ENCODE measurements at regions of chr6 and their contacts with region 1.

Region 1: GRCh38 chr6:79869600-79870084 is 77.7 kb downstream of the ELOVL4 start:
- DNase-seq: peak; percentile 84 to 90 (median 86)
- ATAC-seq: peak; percentile 100
- H3K4me3 ChIP-seq: peak overlapping the region; percentile 7; the same call in 1 of the 2 replicates
- H3K27ac ChIP-seq: no peak overlapping the region
- H3K4me1 ChIP-seq: peaks cover 2 to 4% of the 10 kb centered on the region in 2 experiments; a peak in 3 of 5 replicates
- H3K27me3 ChIP-seq: peaks cover under 1 to 2% of the 10 kb centered on the region in 2 experiments; a peak in 3 of 5 replicates
- CTCF ChIP-seq: peak; percentile 87 to 94 (median 92)
- EP300 ChIP-seq: no peak
- POLR2A ChIP-seq: no peak
- RAD21 ChIP-seq: peak; percentile 39 to 59

Region 2: GRCh38 chr6:79570129-79571029 is 299.3 kb before region 1 on chr6:
- CTCF ChIA-PET with region 1: no interaction called
- POLR2A ChIA-PET with region 1: no interaction called
- in situ Hi-C with region 1: no loop called
- intact Hi-C with region 1: loop called (anchors 2 kb)
- DNase-seq: peak; percentile 38 to 62 (median 42)
- ATAC-seq: peak; percentile 87
- H3K4me3 ChIP-seq: no peak overlapping the region
- H3K27ac ChIP-seq: no peak overlapping the region
- H3K4me1 ChIP-seq: no peaks in the 10 kb centered on the region
- H3K27me3 ChIP-seq: no peaks in the 10 kb centered on the region
- CTCF ChIP-seq: peak; percentile 60 to 89 (median 60)
- EP300 ChIP-seq: no peak
- POLR2A ChIP-seq: no peak
- RAD21 ChIP-seq: peak; percentile 88 to 93

Region 3: DNA sequence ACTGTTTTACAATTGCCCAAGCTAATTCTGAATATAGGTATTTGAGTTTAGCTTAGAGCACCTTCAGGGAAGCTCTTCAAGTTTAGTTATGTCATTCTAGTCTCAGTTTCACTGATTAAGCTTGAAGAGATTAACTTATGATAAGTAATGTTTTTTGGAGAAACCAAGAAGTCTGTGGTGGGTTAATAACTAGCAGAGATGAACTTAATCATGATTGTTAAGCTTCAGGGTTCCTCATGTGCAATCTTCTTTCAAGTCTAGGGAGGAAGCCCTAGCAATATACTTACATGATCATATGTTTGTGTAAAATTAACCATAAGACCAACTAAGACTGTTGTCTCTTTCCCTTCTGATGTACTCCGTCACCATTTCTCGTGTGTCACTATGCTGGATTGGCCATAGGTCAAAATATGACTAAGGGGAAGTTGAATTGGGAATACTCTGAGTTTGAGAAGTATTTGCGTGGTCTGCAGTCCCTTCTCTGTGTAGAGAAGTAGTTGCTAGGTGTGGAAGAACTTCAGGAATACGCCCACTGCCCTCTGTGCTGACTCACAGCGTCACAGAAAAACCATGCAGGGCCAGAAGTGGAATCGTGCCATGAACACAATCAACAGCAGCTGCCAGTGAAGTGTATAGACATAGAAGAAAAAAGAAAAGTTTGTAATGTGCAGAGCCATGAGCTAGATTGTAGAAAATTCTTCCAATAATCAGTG is 150.2 kb before region 1 on chr6:
- CTCF ChIA-PET with region 1: interaction called, 3 read pairs
- POLR2A ChIA-PET with region 1: no interaction called
- in situ Hi-C with region 1: no loop called
- intact Hi-C with region 1: loop called (anchors 5 kb)
- DNase-seq: peak in 2 of 4 experiments; percentile 9 to 23
- ATAC-seq: peak; percentile 67
- H3K4me3 ChIP-seq: no peak overlapping the region
- H3K27ac ChIP-seq: no peak overlapping the region
- H3K4me1 ChIP-seq: no peaks in the 10 kb centered on the region
- H3K27me3 ChIP-seq: 0 out of 5 replicates have a peak, but pooled peaks cover 0 to 1% of the 10 kb centered on the region in 2 experiments
- CTCF ChIP-seq: no peak
- EP300 ChIP-seq: no peak
- POLR2A ChIP-seq: no peak
- RAD21 ChIP-seq: no peak

Region 4: DNA sequence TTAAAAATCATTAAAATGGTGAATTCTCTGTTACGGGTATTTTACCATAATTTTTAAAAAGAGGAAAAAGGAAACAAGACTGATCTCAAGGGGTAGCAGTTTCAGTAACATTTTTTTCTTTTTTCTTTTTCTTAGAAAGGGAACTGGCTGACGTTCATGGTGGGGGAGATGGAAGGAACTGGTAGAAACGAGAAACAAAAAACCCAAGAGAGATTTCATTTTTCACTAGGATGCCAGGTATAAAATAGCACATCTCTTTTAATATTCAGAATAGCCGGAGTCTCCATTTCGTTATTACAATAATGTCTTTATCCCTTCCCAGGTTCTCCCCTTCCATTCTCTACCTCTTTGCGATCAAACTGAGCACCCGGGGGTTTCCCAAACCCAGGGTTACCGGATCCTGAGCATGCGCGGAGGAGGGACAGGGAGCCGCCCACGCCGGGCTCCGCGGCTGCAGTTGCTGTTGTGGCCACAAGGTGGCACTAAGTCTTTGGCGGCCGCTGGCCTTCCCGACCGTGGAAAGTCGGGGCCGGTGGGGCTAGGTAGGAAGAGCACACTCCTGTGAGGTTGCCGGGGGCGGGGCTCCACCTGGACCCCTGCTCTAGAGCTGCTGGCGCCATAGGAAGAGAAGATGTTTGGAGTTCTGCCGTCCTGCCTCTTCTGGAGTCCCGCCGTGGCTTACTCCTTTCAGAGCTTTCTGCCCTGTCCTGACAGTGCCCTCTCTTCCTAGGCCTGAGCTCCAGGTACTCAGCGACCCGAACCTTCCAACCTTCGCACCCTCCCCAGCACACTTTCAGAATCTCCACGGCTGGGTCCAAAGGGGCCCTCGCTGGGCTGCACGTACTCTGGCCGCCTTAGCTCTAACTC is 91.7 kb before region 1 on chr6:
- CTCF ChIA-PET with region 1: interaction called, 18 read pairs
- POLR2A ChIA-PET with region 1: no interaction called
- in situ Hi-C with region 1: no loop called
- intact Hi-C with region 1: loop called (anchors 1 kb)
- DNase-seq: peak; percentile 89 to 95 (median 92)
- ATAC-seq: peak; percentile 98
- H3K4me3 ChIP-seq: peak overlapping the region; percentile 26
- H3K27ac ChIP-seq: no peak overlapping the region
- H3K4me1 ChIP-seq: peaks cover 0 to 6% of the 10 kb centered on the region in 2 experiments; a peak in 3 of 5 replicates
- H3K27me3 ChIP-seq: no peaks in the 10 kb centered on the region; a peak in 1 of 5 replicates
- CTCF ChIP-seq: peak; percentile 92 to 95 (median 93)
- EP300 ChIP-seq: no peak
- POLR2A ChIP-seq: no peak
- RAD21 ChIP-seq: peak; percentile 85 to 87

Region 5: DNA sequence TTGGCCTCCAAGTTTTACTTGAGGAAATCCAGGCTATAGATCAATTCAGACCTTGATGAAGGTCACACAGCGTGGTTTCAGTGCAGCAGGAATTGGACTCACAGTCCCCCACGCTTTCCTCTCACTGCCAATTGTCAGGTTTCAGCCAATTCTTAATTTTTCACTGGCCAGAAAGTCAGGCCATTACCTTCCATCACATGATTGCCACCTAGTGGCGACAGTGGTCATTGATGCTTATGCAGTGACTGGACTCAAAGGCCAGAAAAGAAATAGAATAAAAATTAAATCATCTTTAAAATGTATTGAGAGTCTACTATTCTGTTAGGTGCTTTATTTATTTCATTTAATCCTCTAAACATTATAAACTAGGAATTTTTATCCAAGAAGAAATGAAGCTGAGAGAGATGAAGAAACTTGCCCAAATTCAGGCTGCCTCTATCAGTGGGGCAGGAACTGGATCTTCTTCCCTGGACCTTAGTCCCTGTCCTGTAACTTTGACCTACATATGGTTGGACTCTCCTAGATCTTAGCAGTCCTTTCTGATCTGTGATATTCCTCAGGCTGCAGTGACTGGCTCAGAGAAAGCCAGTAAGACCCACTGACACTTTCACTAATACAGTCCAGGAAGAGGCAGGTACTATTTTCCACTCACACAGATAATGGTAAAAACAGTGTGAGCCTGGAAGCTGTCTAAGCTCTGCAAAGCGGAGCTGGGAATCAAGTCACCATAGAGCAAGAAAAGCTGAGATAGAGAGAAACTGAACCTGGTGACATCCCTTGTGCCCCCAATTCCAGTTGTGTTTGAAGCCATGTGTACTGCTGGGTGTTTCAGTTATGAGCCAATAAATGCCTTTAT is 55.6 kb before region 1 on chr6:
- CTCF ChIA-PET with region 1: no interaction called
- POLR2A ChIA-PET with region 1: no interaction called
- in situ Hi-C with region 1: no loop called
- intact Hi-C with region 1: loop called (anchors 1 kb)
- DNase-seq: peak; percentile 45 to 80 (median 50)
- ATAC-seq: peak; percentile 94
- H3K4me3 ChIP-seq: no peak overlapping the region
- H3K27ac ChIP-seq: no peak overlapping the region
- H3K4me1 ChIP-seq: no peaks in the 10 kb centered on the region
- H3K27me3 ChIP-seq: peaks cover 6 to 10% of the 10 kb centered on the region in 2 experiments; a peak in 2 of 5 replicates
- CTCF ChIP-seq: peak; percentile 74 to 89 (median 76)
- EP300 ChIP-seq: no peak
- POLR2A ChIP-seq: no peak
- RAD21 ChIP-seq: peak; percentile 85 to 86

Region 6: DNA sequence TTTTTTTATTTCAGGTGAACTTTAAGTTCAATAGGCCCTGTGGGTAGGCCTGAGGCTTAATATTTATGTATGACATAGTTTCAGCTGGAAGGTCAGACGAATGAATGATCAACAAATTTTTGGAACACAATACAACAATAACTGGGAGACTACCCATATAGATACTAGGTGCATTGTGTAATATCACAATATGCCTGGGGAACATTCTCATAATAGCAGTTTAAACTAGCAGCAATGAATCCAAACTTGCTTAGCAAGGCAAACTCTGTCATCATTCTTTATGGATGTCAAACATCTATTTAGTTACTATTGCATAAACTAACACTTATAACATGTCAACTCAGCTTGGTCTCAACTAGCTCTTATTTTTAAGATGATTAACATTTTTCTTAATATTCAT is 28.4 kb after region 1 on chr6:
- CTCF ChIA-PET with region 1: no interaction called
- POLR2A ChIA-PET with region 1: no interaction called
- in situ Hi-C with region 1: no loop called
- intact Hi-C with region 1: no loop called
- DNase-seq: no peak
- ATAC-seq: no peak
- H3K4me3 ChIP-seq: no peak overlapping the region
- H3K27ac ChIP-seq: no peak overlapping the region
- H3K4me1 ChIP-seq: no peaks in the 10 kb centered on the region
- H3K27me3 ChIP-seq: no peaks in the 10 kb centered on the region; a peak in 1 of 5 replicates
- CTCF ChIP-seq: no peak
- EP300 ChIP-seq: no peak
- POLR2A ChIP-seq: no peak
- RAD21 ChIP-seq: no peak

Region 7: GRCh38 chr6:80094017-80094416 is 224.4 kb after region 1 on chr6:
- CTCF ChIA-PET with region 1: no interaction called
- POLR2A ChIA-PET with region 1: no interaction called
- in situ Hi-C with region 1: no loop called
- intact Hi-C with region 1: loop called (anchors 10 kb)
- DNase-seq: peak; percentile 26 to 38 (median 32)
- ATAC-seq: peak; percentile 49; the same call in 1 of the 3 replicates
- H3K4me3 ChIP-seq: no peak overlapping the region
- H3K27ac ChIP-seq: no peak overlapping the region
- H3K4me1 ChIP-seq: no peaks in the 10 kb centered on the region
- H3K27me3 ChIP-seq: no peaks in the 10 kb centered on the region; a peak in 1 of 5 replicates
- CTCF ChIP-seq: peak; percentile 34 to 67 (median 38); a peak in 3 of 6 replicates
- EP300 ChIP-seq: no peak
- POLR2A ChIP-seq: no peak
- RAD21 ChIP-seq: peak; percentile 61 to 77

Measured in K562 (cell line).